Activated naive CD4-positive, alpha-beta T cell treated with anti-CD3 and anti-CD28 coated beads for 36 hours (primary cell): ENCODE measurements at regions of chr10 and their contacts with region 1.

Region 1: GRCh38 chr10:88990384-88991160 is at the start of gene FAS:
- DNase-seq: peak; percentile 96
- H3K4me3 Mint-ChIP-seq: peak within 1 kb of the TSS; percentile 92
- H3K27ac Mint-ChIP-seq: peak within 1 kb of the TSS; percentile 98
- H3K4me1 Mint-ChIP-seq: peaks cover 46% of the 10 kb centered on the region
- H3K27me3 Mint-ChIP-seq: no peaks in the 10 kb centered on the region
- total RNA-seq, gene FAS: 69.3 to 72.9 TPM

Region 2: DNA sequence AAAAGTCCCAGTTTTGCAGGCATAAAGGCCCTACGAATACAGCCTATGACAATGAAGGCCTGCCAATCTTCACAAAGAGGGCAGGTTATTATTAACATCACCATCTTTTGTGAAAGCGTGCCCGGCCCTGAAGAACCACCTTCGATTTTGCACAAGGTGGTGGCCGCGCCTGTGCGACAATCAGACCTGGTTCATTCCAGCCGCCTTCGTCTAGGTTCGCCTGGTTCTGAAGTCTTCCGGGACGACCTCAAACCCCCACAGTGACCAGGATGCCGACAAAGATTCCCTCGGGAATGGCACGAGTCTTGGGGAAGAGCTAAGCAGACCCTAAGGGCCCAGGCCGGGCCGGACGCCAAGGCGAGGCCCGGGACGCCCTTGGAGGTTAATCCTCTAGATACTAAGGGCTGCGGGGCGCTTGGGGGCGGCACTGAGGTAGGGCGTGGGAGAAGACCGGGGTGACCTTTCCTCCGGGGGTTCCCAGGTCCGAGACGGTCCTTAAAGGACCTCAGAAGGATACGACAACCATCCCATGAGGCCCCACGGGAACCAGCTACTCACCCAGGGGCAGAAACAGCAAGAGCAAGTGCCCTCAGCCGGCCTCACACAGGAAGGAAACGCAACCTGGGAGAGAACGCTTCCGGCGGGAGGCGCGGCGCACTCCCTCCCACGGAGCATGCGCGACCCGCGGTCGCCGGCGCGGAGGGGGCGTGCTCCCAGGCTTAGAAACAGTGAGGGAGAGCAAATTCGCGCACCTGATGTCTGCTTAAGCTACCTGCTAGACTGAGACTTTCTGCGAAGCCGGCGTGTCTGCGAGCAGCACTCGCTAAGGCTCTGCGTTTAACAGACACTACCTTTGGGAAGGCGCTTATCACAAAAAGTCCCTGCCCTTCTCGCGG is 1172.7 kb before region 1 on chr10 and contains the start of gene ATAD1:
- CTCF ChIA-PET with region 1: no interaction called
- intact Hi-C with region 1: loop called (anchors 5 kb)
- DNase-seq: peak; percentile 90
- H3K4me3 Mint-ChIP-seq: peak within 1 kb of the TSS; percentile 87
- H3K27ac Mint-ChIP-seq: peak within 1 kb of the TSS; percentile 94
- H3K4me1 Mint-ChIP-seq: peaks cover 28% of the 10 kb centered on the region
- H3K27me3 Mint-ChIP-seq: no peaks in the 10 kb centered on the region
- total RNA-seq, gene ATAD1: 47.4 to 53.7 TPM

Region 3: DNA sequence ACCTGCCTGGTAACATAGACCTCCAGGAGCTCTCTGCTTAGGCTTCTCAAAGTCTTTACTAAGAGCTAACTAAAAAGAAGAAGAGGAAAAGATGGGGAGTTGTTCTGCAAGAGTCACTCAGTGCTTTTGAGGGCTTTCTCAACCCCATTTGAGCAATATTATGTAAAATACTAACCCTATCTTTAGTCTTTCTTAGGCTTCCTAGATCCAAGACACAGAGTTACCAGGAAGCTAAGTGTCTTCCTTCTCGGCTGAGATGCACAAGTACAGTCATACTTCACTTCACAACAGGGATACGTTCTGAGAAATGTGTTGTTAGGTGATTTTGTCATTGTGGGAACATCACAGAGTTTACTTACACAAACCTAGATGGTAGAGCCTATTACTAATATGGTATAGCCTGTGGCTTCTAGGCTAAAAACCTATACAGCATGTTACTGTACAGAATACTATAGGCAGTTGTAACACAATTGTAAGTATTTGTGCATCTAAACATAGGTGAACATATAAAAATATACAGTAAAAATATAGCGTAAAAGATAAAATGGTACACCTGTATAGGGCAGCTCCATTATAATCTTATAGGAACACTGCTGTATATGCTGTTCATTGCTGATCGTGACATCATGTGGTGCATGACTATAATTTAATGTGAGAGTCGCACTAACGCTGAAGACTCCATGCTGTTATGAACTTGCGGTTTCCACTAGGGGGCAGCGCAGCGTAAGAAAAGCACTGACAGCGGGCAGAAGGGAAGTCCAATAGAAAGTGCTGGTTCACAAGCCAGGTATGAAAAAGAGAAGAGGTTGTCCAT is 155.3 kb before region 1 on chr10:
- CTCF ChIA-PET with region 1: interaction called, 8 read pairs
- intact Hi-C with region 1: loop called (anchors 2 kb)
- DNase-seq: peak; percentile 95
- H3K4me3 Mint-ChIP-seq: no peak overlapping the region
- H3K27ac Mint-ChIP-seq: no peak overlapping the region
- H3K4me1 Mint-ChIP-seq: peaks cover 20% of the 10 kb centered on the region
- H3K27me3 Mint-ChIP-seq: no peaks in the 10 kb centered on the region

Region 4: DNA sequence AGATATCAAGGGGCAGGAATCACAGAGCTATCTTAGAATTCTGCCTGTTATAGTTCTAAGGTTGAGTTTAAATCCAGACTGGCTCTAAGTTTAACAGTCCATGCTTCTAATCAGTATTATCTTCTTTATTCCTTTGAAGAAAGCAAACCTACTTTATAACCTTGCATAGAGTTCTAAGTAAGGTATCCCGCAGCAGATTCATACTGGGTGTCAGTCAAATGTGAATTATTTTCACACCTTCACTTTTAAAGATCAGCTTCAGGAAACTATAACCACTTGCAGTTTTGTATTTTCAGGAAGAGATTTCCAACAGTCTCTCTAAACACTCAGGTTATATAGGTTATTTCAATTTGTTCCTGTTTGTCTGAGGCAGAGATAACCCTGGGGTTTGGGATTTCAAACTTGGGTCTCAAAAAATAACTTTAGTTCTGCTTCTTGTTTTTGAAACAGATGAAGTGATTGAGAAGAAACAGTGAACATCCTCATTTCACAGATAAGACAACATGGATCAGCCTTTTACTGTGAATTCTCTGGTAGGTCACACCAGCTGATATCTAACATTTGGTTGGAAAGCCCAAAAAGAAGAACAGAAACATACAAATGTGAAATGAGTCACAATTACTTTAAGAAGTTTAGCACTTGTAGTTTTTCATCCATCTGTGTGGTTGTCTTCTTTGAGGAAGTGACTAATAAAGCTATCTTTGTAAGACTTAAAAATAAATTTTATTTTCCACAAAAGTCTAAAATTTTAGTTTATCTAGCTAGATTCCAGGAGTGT is 89.2 kb before region 1 on chr10:
- CTCF ChIA-PET with region 1: interaction called, 4 read pairs
- intact Hi-C with region 1: loop called (anchors 1 kb)
- DNase-seq: no peak
- H3K4me3 Mint-ChIP-seq: peak overlapping the region; percentile 2
- H3K27ac Mint-ChIP-seq: peak overlapping the region; percentile 82
- H3K4me1 Mint-ChIP-seq: peaks cover 59% of the 10 kb centered on the region
- H3K27me3 Mint-ChIP-seq: no peaks in the 10 kb centered on the region

Region 5: GRCh38 chr10:89001024-89001728 is 10.6 kb after region 1 on chr10:
- CTCF ChIA-PET with region 1: interaction called, 6 read pairs
- intact Hi-C with region 1: loop called (anchors 1 kb)
- DNase-seq: peak; percentile 73
- H3K4me3 Mint-ChIP-seq: peak overlapping the region; percentile 53
- H3K27ac Mint-ChIP-seq: peak overlapping the region; percentile 83
- H3K4me1 Mint-ChIP-seq: peaks cover 54% of the 10 kb centered on the region
- H3K27me3 Mint-ChIP-seq: no peaks in the 10 kb centered on the region

Region 6: GRCh38 chr10:89163265-89163995 is 172.9 kb after region 1 on chr10:
- CTCF ChIA-PET with region 1: interaction called, 5 read pairs
- intact Hi-C with region 1: loop called (anchors 1 kb)
- DNase-seq: peak; percentile 69
- H3K4me3 Mint-ChIP-seq: peak overlapping the region; percentile 33
- H3K27ac Mint-ChIP-seq: peak overlapping the region; percentile 5
- H3K4me1 Mint-ChIP-seq: peaks cover 36% of the 10 kb centered on the region
- H3K27me3 Mint-ChIP-seq: peaks cover 7% of the 10 kb centered on the region

Region 7: DNA sequence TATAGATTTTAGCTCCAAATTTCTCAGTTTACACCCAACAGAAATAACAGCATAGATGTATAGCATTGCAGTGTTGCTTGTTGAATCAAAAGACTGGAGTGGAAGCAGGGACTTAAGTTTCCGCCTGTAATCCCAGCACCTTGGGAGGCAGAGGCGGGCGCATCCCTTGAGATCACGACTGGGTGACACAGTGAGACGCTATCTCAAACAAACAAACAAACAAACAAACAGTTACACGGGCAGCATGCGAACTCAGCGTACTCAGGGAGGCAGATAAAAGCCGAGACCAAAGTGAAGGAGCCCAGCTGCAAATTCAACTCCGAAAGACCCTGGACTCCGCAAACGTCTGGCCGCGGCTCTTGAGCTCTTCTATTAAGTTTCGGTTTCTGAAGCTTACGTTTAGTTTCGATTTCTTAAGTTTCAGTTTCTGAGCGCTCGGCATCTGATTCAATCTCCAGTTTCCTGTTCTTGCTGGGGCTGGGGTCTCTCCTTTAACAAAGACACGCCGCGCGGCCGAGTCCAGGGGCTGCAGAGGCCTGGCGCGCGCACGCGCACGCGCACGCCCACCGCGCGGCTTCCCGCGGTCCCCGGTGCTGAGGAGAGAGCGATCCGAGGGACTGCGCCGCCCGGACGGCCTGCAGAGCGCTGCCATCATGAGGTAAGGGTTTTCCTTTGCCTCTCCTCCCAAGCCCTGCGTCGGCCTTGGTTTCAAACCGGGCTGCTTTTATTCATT is 423.7 kb after region 1 on chr10 and contains the start of gene IFIT5:
- CTCF ChIA-PET with region 1: no interaction called
- intact Hi-C with region 1: loop called (anchors 2 kb)
- DNase-seq: peak; percentile 64
- H3K4me3 Mint-ChIP-seq: peak within 1 kb of the TSS; percentile 85
- H3K27ac Mint-ChIP-seq: peak within 1 kb of the TSS; percentile 96
- H3K4me1 Mint-ChIP-seq: peaks cover 45% of the 10 kb centered on the region
- H3K27me3 Mint-ChIP-seq: no peaks in the 10 kb centered on the region
- total RNA-seq, gene IFIT5: 7.0 to 7.2 TPM